Sciatic nerve (tissue), 2 donors: ENCODE measurements at regions of chr3 and their contacts with region 1.

Region 1: GRCh38 chr3:134373994-134374790 is at the start of gene AMOTL2:
- DNase-seq: peak; percentile 91
- ATAC-seq: peak; percentile 76
- total RNA-seq, gene AMOTL2: 158 TPM

Region 2: GRCh38 chr3:133661454-133662277 is 712.5 kb before region 1 on chr3 and contains the start of gene TOPBP1:
- intact Hi-C with region 1: no loop called
- DNase-seq: peak; percentile 87
- ATAC-seq: peak; percentile 88
- total RNA-seq, gene TOPBP1: 20.0 TPM

Region 3: DNA sequence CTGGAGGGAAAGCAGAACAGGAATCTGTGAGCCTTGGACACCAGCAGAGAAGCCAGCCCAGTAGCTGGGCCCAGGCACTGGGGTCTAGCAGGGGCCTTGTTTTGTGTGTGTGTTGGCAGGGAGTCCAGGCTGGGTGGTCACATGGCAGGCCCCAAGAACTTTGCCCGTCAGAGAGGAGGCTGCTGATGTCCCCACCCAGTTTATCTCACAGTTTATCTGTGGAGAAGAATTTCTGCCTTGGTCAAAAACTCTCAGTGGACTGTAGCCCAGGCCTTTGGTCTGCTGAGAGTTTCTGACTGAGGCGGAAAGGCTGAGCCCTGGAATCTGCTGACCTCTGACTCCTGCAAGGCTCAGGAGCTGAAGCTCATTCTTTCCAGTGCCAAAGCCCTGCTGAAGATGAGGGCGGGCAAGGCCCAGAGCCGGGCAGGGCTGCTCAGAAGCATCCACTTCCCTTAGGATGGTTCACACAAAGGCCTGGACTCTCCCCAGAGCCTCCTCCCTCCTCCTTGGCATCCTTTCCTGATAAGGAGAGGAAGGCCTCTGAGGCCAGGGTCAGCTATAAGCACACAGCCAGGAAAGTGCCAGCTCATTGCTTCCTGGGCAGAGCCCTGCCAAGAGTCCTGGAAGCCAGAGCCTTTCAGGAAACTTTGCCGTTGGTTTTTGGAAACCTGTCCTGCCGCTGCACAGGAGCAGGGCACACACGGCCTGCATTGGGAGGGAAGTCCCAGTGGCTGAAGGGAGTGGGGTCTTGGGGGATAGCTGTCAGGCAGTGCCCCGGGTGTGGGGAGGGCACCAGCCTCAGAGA is 307.3 kb before region 1 on chr3:
- intact Hi-C with region 1: no loop called
- DNase-seq: no peak
- ATAC-seq: peak; percentile 53

Region 4: GRCh38 chr3:134308350-134308891 is 65.8 kb before region 1 on chr3:
- intact Hi-C with region 1: loop called (anchors 5 kb)
- DNase-seq: peak; percentile 93
- ATAC-seq: peak; percentile 92

Region 5: DNA sequence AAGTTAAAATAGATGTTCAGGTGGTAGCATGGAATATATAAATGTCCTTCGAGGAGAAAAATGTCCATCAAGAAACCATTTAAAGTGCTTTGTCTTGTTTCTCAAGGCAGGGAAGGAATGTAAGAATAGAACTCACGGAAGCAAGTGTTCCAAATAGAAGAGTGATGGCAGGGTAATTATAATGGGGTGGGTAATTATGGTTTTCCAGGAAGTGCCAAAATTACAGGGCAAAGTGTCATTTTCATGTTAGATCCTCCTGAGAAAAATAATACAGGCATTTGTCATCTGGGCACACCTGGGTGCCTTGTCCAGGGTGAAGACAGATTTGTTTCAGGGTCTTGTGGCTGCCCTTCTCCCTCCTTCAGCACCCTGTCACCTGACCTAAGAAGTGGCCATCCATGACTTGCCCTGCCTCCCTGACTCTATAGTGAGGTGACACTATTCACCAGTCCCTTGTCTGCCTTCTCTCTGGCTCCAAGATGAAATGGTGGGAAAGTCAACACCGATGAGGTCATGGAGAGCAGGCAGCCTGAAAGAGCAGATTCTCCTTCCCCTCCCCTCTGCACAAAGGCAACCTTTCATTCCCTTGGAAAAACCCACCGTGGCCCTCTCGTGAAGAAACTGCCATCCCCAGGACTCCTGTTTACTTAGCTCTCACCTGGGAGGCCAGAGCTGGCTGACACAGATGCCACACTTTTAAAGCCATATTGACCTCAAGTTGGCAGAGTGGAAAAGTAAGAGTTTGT is 45.2 kb after region 1 on chr3:
- intact Hi-C with region 1: no loop called
- DNase-seq: no peak
- ATAC-seq: no peak

Region 6: GRCh38 chr3:134449277-134449676 is 75.1 kb after region 1 on chr3:
- intact Hi-C with region 1: loop called (anchors 5 kb)
- DNase-seq: no peak
- ATAC-seq: peak; percentile 70

Region 7: GRCh38 chr3:134473868-134474546 is 99.8 kb after region 1 on chr3:
- intact Hi-C with region 1: loop called (anchors 10 kb)
- DNase-seq: peak; percentile 91
- ATAC-seq: peak; percentile 84

Region 8: GRCh38 chr3:134663721-134664456 is 289.7 kb after region 1 on chr3:
- intact Hi-C with region 1: no loop called
- DNase-seq: no peak
- ATAC-seq: no peak